Gastrocnemius medialis (tissue), 4 donors: ENCODE measurements at regions of chr7 and their contacts with region 1.

Region 1: DNA sequence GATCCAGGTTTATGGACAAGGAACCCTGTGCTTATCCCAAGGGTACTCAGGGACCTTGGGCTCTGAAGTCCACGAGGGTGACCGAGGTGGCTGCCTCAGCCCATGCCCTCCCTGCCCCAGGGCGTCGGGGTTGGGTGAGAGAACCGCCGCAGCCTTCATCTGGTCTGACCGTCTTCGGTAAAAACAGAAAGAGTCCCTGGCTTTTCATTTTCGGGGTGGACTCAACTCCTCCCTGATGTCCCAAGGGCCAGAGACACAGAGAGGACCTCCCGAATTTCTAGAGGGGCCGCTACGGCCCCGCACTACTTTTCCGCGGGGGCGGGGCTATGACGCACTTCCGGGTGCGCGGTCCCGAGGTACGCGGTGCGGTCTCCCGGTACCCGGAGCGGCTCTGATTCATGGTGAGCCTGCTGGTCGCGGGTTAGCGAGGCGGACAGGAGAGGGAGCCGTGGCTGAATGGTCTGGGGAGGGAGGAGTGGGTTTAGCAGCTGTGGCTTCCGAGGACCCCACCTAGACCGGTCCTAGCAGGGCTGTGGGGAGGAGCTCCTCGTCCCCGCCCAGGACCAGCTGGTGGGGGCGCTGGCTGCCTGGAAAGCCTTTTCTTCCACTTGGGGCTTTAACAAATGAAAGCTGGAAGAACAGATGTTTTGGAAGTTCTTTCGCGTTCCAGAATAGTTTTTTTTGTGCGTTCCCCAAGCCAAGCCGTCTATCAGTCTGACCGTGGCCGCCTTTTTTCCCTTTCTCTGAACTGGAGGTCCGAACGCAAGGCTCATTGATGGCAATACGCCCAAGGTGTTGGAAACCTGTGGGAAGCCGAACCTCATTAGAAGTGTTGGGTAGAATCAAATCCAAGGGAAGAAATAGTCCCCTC is at the start of gene ZSCAN21:
- DNase-seq: peak; percentile 67 to 79
- ATAC-seq: peak; percentile 86 to 91
- H3K4me3 ChIP-seq: peak within 1 kb of the TSS; percentile 74 to 94 (median 82)
- H3K27ac ChIP-seq: peak within 1 kb of the TSS; percentile 92 to 98 (median 97)
- H3K4me1 ChIP-seq: peaks cover 8 to 15% of the 10 kb centered on the region in 2 donors
- H3K27me3 ChIP-seq: no peaks in the 10 kb centered on the region
- CTCF ChIP-seq: peak in 1 of 5 experiments; percentile 35
- POLR2A ChIP-seq: peak; percentile 76 to 85
- total RNA-seq, gene ZSCAN21: 14.4 to 26.4 (median 22.3) TPM

Region 2: DNA sequence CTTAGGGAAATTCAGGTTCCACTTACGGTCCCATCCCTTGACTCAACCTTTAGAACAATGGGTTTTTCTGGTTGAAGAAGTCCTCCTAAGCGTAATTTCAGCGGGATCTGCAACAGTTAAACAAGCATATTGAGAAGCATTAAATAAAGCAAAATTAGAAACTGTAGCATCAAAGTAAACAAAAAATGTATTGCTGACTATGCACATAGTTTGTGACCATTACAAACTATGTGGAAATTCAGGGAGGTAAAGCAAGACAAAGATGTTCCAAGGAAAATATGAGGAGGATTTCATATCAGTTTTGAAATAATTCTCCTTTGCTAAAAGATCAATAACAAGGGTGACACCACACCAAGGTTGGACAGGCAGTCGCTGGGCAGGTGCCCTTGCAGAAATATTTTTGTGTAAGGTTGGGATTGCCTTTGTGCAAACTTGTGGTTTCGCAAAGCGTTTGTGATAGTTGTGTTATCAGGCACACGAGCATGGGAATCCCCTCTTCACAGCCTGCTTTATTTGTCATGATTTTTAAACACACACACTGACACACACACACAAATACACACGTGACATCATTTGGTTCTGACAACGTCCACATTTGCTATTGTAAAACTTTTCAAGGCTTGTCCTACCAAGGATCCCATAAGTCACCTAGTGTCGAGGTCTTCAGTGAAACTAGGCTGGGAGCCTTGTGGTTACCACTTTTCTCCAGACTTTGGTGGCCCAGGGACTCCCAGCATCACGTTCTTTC is 364.4 kb before region 1 on chr7:
- in situ Hi-C with region 1: no loop called
- intact Hi-C with region 1: no loop called
- DNase-seq: no peak
- ATAC-seq: no peak
- H3K4me3 ChIP-seq: no peak overlapping the region
- H3K27ac ChIP-seq: no peak overlapping the region
- H3K4me1 ChIP-seq: no peaks in the 10 kb centered on the region
- H3K27me3 ChIP-seq: no peaks in the 10 kb centered on the region
- CTCF ChIP-seq: no peak
- POLR2A ChIP-seq: no peak

Region 3: GRCh38 chr7:99975782-99976521 is 73.7 kb before region 1 on chr7 and contains the start of gene AZGP1:
- in situ Hi-C with region 1: no loop called
- intact Hi-C with region 1: loop called (anchors 1 kb)
- DNase-seq: no peak
- ATAC-seq: no peak
- H3K4me3 ChIP-seq: no peak within 1 kb of the TSS
- H3K27ac ChIP-seq: no peak within 1 kb of the TSS
- H3K4me1 ChIP-seq: no peaks in the 10 kb centered on the region
- H3K27me3 ChIP-seq: peaks cover 0 to 2% (median 0%) of the 10 kb centered on the region in 3 donors
- CTCF ChIP-seq: no peak
- POLR2A ChIP-seq: no peak
- total RNA-seq, gene AZGP1: 2.6 to 10.3 (median 4.2) TPM in 3 of 4 donors, not detected in the other

Region 4: GRCh38 chr7:99997545-99998137 is 52.0 kb before region 1 on chr7:
- in situ Hi-C with region 1: no loop called
- intact Hi-C with region 1: loop called (anchors 2 kb)
- DNase-seq: peak in 1 of 2 donors; percentile 25
- ATAC-seq: peak in 1 of 2 donors; percentile 36
- H3K4me3 ChIP-seq: peak overlapping the region; percentile 58 to 68 (median 63)
- H3K27ac ChIP-seq: peak overlapping the region; percentile 44 to 73 (median 66)
- H3K4me1 ChIP-seq: peaks cover 4 to 8% of the 10 kb centered on the region in 2 donors
- H3K27me3 ChIP-seq: peaks cover 0 to 6% (median 0%) of the 10 kb centered on the region in 3 donors
- CTCF ChIP-seq: peak in 2 of 5 experiments; percentile 24 to 34
- POLR2A ChIP-seq: no peak

Region 5: GRCh38 chr7:100015232-100016209 is 34.2 kb before region 1 on chr7 and contains the start of gene ZKSCAN1:
- in situ Hi-C with region 1: no loop called
- intact Hi-C with region 1: loop called (anchors 1 kb)
- DNase-seq: peak; percentile 79 to 84
- ATAC-seq: peak; percentile 97
- H3K4me3 ChIP-seq: peak within 1 kb of the TSS; percentile 64 to 99 (median 94)
- H3K27ac ChIP-seq: peak within 1 kb of the TSS; percentile 92 to 99 (median 98)
- H3K4me1 ChIP-seq: peaks cover 15 to 22% of the 10 kb centered on the region in 2 donors
- H3K27me3 ChIP-seq: no peaks in the 10 kb centered on the region
- CTCF ChIP-seq: no peak
- POLR2A ChIP-seq: peak; percentile 85 to 87
- total RNA-seq, gene ZKSCAN1: 15.0 to 17.7 (median 15.5) TPM

Region 6: DNA sequence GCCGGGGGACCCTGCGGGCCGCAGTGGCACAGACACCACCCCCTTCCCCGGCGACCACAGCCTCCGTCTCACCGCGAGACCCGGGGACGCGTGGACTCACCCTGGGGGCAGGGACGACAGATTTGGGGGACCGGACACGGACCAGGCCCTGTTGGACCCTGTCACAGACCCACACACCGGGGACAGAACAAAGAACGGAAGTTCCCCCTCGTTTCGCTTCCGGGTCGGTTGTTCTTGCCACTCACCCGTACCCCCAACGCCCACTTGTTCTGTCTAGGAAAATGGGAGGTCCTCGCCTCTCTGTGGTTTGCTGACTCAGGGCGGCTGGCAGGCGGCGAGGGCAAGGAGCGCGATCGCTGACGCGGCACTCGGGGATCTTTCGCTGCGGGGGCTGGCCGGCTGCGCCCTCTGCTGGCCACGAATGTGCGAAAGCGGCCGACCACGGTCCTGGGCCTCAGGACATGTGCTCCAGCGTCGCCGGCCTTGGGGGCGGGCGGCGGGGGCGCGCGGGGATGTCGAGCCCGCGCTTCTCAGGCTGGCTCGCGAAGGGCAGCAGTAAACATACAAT is 31.9 kb after region 1 on chr7 and contains the start of gene ZNF3:
- in situ Hi-C with region 1: no loop called
- intact Hi-C with region 1: loop called (anchors 1 kb)
- DNase-seq: peak; percentile 99
- ATAC-seq: peak; percentile 95 to 96
- H3K4me3 ChIP-seq: peak within 1 kb of the TSS; percentile 81 to 99 (median 87)
- H3K27ac ChIP-seq: peak within 1 kb of the TSS; percentile 86 to 96 (median 90)
- H3K4me1 ChIP-seq: peaks cover 22 to 24% of the 10 kb centered on the region in 2 donors
- H3K27me3 ChIP-seq: no peaks in the 10 kb centered on the region
- CTCF ChIP-seq: peak; percentile 93 to 98 (median 94)
- POLR2A ChIP-seq: peak; percentile 62 to 85
- total RNA-seq, gene ZNF3: 11.2 to 19.2 (median 16.1) TPM